Gastrocnemius medialis (tissue), 4 donors: ENCODE measurements at regions of chr9 and their contacts with region 1.

Region 1: DNA sequence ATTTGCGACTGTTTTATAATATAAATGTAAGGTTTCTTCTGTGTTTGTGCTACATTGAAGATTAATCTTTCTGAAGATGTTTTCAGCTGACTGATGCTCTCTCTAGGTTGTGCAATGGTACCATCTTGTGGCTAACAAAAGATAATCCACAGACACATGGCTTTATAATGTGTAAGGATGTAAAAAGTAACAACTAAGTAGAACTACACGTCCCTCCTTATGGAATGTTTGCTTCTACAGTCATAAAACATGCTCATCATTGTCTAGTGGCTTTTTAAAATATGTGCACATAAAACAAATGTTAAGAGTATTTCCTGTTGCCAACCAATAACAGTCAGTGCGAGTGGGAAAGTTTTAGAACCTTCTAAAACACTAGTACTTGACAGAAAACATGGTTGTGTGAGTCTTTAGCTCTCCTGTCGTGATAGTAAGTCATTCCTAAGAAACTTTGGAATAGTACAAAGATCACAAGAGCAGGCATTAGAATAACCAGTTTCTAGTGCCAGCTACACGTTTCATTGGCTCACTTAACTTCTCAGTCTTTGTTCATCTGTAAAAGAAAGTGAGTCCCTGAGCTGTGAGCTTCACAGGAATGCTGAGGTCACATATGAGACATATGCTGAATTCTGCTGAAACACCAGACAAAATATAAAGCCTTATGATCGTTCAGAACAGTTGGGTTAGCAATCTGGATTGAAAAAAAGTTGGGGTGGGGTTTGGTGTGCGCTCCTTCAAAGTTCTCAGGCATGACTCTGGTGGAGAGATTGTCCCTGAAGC is 75.7 kb upstream of the GLIS3 start:
- DNase-seq: no peak
- ATAC-seq: no peak
- H3K4me3 ChIP-seq: no peak overlapping the region
- H3K27ac ChIP-seq: no peak overlapping the region
- H3K4me1 ChIP-seq: no peaks in the 10 kb centered on the region
- H3K27me3 ChIP-seq: no peaks in the 10 kb centered on the region
- CTCF ChIP-seq: peak in 3 of 5 experiments; percentile 14 to 24 (median 20)
- POLR2A ChIP-seq: no peak

Region 2: DNA sequence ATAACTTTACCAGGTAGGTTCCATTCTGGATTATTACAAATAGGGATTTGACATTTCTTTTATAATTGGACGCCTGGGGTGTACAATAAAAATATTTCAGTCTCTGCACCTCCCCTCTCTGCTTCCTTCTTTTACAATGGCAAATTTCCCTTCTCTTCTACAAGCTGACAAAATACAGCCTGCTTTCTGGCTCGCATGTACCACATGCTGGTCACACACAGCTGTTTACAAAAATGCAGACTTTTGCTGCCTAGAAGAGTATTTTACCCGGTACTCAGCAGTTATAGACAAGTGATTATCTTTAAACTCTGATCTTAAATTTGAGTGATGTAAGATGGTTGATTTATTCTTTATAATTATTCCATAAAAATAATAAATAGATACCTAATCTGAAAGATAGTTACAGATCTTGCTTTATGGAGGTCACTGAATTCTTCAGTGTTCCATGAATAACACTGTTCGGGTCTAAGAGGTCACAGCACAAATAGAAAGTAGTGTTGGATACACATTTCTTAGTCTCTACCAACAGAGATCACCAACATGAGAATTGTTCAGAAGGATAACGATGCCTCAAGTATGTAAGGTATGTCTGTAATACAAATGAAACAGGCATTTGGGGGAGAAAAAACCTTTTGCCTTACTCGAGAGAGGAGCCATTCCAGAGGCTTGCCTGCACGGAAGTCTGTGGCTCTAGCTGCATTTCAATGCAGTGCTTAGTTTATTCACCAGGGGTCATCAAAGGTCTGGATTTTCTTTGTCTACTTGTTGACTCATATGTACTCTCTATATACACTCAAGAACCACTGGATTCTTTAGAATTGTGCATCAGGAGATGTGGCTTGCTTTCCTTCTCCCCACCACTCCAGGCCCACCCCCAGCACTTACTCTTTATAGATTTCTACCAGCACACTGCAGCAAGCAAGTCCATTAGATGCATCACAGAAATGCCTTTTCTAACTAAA is 643.3 kb before region 1 on chr9:
- in situ Hi-C with region 1: no loop called
- intact Hi-C with region 1: loop called (anchors 10 kb)
- DNase-seq: peak in 1 of 2 donors; percentile 6
- ATAC-seq: peak; percentile 82 to 99
- H3K4me3 ChIP-seq: peak overlapping the region in 2 of 4 donors; percentile 8 to 32
- H3K27ac ChIP-seq: no peak overlapping the region
- H3K4me1 ChIP-seq: no peaks in the 10 kb centered on the region
- H3K27me3 ChIP-seq: no peaks in the 10 kb centered on the region
- CTCF ChIP-seq: peak; percentile 20 to 60 (median 51)
- POLR2A ChIP-seq: no peak

Region 3: DNA sequence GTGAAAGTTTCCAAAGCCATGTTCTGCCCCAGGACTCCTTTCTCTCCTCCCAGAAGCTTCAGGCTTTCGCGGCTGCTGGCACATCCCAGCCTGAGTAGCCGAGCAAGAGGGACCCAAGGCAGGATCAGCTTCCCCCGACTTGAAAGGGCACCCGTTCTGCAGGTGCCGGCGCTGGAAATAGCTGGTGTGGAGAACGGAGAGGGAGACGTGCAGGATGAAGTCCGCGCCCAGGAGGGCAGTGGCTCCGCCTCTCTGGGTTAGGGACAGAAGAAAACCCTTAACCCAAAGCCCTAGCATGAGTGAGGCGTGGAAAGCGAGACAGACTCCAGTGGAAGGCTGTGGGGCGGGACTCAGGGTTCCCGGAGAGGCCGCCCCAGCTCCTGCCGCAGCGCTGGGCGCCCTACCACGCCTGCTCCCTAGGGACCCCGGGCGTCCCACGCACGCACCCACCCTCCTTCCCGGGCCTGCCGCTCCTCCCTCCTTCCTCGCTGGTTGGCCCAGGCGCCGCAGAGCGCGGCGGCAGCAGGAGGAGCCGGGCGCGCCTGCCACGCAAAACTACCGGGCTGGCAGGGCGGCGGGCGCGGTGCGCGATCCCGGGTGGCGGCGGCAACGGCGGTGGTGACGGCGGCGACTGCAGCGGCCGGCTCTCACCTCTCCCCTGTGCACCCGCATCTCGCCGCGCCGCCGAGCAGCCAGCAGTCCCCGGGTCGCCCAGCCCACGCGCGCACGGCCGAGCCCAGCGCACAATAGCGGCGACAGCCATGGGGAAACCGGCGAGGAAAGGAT is 114.5 kb after region 1 on chr9 and contains the start of gene SLC1A1:
- in situ Hi-C with region 1: no loop called
- intact Hi-C with region 1: no loop called
- DNase-seq: peak; percentile 19 to 26
- ATAC-seq: peak; percentile 71 to 77
- H3K4me3 ChIP-seq: peak within 1 kb of the TSS; percentile 64 to 80 (median 70)
- H3K27ac ChIP-seq: peak within 1 kb of the TSS; percentile 33 to 68 (median 62)
- H3K4me1 ChIP-seq: peaks cover 3 to 13% of the 10 kb centered on the region in 2 donors
- H3K27me3 ChIP-seq: peaks cover 0 to 5% (median 0%) of the 10 kb centered on the region in 3 donors
- CTCF ChIP-seq: no peak
- POLR2A ChIP-seq: no peak
- total RNA-seq, gene SLC1A1: 1.2 to 2.2 (median 1.6) TPM